Activated naive CD4-positive, alpha-beta T cell treated with anti-CD3 and anti-CD28 coated beads for 36 hours (primary cell): ENCODE measurements at regions of chr4 and their contacts with region 1.

Region 1: DNA sequence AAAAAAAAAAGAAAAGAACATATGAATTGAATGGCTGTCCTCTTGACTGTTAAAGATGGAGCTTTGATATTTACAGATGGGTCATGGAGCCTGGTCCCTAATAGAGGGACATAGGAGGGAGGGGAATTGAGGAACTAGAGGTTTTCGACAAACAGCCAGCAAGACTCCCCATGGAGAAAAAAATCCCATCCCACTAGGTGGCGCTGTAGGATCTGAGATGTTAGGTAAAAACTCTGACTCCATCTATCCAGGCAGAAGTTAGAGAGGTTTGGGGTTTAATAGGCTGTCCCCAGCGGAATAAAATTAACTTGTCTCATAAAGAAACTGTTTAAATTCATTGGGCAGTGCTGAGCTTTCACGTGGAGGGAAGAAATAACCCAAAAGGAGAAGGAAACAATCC is 45.9 kb downstream of the HMGB2 start:
- DNase-seq: peak; percentile 89
- H3K4me3 Mint-ChIP-seq: no peak overlapping the region
- H3K27ac Mint-ChIP-seq: no peak overlapping the region
- H3K4me1 Mint-ChIP-seq: peaks cover 15% of the 10 kb centered on the region
- H3K27me3 Mint-ChIP-seq: no peaks in the 10 kb centered on the region

Region 2: DNA sequence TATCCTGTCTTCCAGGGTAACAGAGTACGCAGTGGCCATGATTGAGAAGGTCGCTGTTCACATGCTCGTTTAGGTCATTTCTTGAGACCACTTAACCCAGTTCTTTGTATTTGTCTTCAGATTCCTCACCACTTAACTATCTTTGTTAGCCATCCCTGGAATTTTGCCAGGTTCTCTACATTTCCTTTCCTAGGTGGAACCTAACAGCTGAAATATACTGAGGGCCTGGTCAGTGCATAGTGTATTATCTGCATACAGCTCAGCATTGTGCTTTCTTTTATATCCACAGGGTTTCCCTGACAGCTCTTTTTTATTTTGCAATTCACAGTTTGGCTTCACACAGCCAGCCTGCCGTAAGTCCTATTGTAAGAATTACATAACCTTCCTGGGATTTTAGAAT is 268.6 kb before region 1 on chr4:
- CTCF ChIA-PET with region 1: no interaction called
- intact Hi-C with region 1: no loop called
- DNase-seq: no peak
- H3K4me3 Mint-ChIP-seq: no peak overlapping the region
- H3K27ac Mint-ChIP-seq: no peak overlapping the region
- H3K4me1 Mint-ChIP-seq: no peaks in the 10 kb centered on the region
- H3K27me3 Mint-ChIP-seq: no peaks in the 10 kb centered on the region

Region 3: DNA sequence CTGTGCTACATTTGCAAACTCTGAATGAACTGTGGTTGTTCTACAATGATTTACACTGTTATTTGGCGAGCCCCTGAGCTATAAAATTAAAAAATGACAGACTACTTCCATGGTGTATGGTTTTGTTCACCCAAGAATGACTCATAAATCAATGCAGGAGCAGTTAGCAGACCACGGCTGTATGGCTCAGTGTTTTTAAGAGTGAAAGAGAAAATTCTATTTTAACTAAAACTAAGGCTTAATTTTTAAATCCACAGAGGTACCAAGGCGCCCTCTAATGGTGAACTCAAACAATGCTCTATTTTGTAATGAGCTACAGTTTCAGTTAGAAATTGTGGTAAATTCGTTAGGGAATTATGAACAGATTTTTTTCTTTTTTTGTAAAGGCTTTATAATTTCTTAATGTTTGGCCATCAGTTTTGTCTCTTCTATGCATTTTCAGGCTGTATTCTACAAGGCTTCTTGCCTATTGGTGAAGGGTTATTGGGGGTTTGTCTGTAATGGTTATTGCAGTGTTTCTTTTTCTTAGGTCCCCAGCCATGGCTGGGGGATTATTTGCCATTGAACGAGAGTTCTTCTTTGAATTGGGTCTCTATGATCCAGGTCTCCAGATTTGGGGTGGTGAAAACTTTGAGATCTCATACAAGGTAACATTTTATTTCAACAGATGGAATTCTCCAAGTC is 13.4 kb after region 1 on chr4:
- CTCF ChIA-PET with region 1: interaction called, 21 read pairs
- intact Hi-C with region 1: loop called (anchors 1 kb)
- DNase-seq: peak; percentile 39
- H3K4me3 Mint-ChIP-seq: no peak overlapping the region
- H3K27ac Mint-ChIP-seq: no peak overlapping the region
- H3K4me1 Mint-ChIP-seq: peaks cover 2% of the 10 kb centered on the region
- H3K27me3 Mint-ChIP-seq: no peaks in the 10 kb centered on the region

Region 4: GRCh38 chr4:173318648-173319211 is 30.4 kb after region 1 on chr4:
- CTCF ChIA-PET with region 1: interaction called, 6 read pairs
- intact Hi-C with region 1: loop called (anchors 2 kb)
- DNase-seq: no peak
- H3K4me3 Mint-ChIP-seq: no peak overlapping the region
- H3K27ac Mint-ChIP-seq: no peak overlapping the region
- H3K4me1 Mint-ChIP-seq: peaks cover 11% of the 10 kb centered on the region
- H3K27me3 Mint-ChIP-seq: no peaks in the 10 kb centered on the region

Region 5: DNA sequence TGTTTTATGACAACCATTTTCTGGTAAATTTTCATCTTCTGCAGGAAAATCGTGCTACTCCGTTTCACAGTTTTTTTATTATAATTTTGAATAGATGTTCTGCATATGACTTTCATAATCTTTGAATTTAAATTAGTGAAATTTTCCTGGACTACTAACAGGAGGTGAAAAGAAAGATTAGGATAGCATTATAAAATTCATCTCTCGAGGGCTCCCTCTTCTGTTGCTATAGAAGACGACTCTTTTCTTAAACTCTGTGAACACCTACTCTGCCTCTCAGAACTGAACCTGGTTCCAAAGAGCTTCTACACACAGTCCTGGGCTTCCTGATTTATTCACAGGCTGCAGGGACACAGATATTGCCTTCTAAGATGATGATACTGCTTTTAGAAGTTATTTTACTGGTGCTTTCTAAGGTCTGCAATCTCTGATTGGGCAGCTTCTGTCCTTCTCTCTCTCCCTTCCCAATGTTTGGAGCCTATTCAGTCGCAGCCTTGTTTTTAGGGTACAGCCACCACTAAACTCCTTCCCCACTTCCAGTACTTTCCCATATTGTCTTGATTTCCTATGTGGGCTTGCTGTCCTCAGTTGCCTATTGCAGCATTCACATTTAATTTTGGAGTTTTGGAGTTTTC is 72.4 kb after region 1 on chr4:
- CTCF ChIA-PET with region 1: no interaction called
- intact Hi-C with region 1: loop called (anchors 1 kb)
- DNase-seq: no peak
- H3K4me3 Mint-ChIP-seq: no peak overlapping the region
- H3K27ac Mint-ChIP-seq: no peak overlapping the region
- H3K4me1 Mint-ChIP-seq: peaks cover 5% of the 10 kb centered on the region
- H3K27me3 Mint-ChIP-seq: peaks cover 8% of the 10 kb centered on the region

Region 6: GRCh38 chr4:173370477-173371291 is 82.4 kb after region 1 on chr4 and contains the start of gene SAP30:
- CTCF ChIA-PET with region 1: no interaction called
- intact Hi-C with region 1: loop called (anchors 1 kb)
- DNase-seq: peak; percentile 98
- H3K4me3 Mint-ChIP-seq: peak within 1 kb of the TSS; percentile 99
- H3K27ac Mint-ChIP-seq: peak within 1 kb of the TSS; percentile 99
- H3K4me1 Mint-ChIP-seq: peaks cover 18% of the 10 kb centered on the region
- H3K27me3 Mint-ChIP-seq: peaks cover 20% of the 10 kb centered on the region
- total RNA-seq, gene SAP30: 9.2 to 9.7 TPM

Region 7: DNA sequence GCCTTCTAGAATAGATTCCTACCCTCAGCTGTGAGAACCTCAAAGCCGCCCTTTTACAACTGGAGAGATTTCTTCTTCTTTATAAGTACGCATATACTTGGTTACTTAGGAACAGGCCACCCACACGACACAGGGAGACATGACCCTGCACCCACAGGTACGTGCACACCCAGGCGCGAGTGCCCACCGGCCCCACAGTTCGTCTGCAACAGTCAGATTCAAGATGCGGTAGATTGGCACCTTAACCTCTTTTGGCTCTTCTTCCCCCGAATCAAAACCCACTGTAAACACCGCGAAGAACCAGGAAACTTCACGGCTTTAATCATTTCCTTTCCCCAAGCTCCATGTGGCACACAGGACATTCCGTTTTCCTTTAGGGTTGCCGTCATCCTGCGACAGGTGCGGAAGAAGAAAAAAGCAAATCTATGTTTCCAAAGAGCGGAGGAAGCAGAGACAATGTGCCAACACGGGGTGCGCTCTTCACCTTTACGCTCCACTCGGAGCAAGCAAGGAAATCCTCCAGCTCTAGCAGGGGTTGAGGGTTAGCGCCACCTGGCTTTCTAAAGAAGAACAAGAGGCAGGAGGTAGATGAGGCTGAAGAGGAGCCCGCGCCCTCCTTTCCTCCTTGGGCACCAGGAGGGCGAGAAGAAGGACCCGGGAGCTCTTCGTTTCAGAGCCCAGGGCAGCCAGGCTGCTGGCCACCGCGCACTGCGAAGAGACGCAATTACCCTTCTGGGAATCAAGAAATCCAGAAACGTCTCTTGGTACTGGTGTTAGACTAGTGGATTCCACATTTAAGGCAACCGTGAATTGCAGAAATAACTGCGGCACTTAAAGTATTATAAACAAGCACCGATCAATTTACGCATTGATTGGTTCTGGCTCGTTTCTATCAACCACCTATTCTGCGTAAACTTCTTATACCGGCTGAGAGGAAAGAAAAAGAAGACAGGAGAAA is 206.0 kb after region 1 on chr4:
- CTCF ChIA-PET with region 1: interaction called, 3 read pairs
- intact Hi-C with region 1: loop called (anchors 1 kb)
- DNase-seq: peak; percentile 75
- H3K4me3 Mint-ChIP-seq: peak overlapping the region; percentile 64
- H3K27ac Mint-ChIP-seq: no peak overlapping the region
- H3K4me1 Mint-ChIP-seq: peaks cover 10% of the 10 kb centered on the region
- H3K27me3 Mint-ChIP-seq: peaks cover 32% of the 10 kb centered on the region

Region 8: GRCh38 chr4:173707658-173708419 is 419.5 kb after region 1 on chr4:
- CTCF ChIA-PET with region 1: no interaction called
- intact Hi-C with region 1: no loop called
- DNase-seq: no peak
- H3K4me3 Mint-ChIP-seq: no peak overlapping the region
- H3K27ac Mint-ChIP-seq: no peak overlapping the region
- H3K4me1 Mint-ChIP-seq: no peaks in the 10 kb centered on the region
- H3K27me3 Mint-ChIP-seq: no peaks in the 10 kb centered on the region